ENCODE measurements at regions of chr3 and their contacts with region 1.

Region 1: GRCh38 chr3:129934234-129935123 is 40.0 kb upstream of the TRH start:
- DNase-seq: no peak
- ATAC-seq: peak; percentile 58
- H3K4me3 ChIP-seq: no peak overlapping the region
- H3K27ac ChIP-seq: no peak overlapping the region
- H3K4me1 ChIP-seq: no peaks in the 10 kb centered on the region
- H3K27me3 ChIP-seq: peaks cover 0 to 2% of the 10 kb centered on the region in 2 donors

Region 2: DNA sequence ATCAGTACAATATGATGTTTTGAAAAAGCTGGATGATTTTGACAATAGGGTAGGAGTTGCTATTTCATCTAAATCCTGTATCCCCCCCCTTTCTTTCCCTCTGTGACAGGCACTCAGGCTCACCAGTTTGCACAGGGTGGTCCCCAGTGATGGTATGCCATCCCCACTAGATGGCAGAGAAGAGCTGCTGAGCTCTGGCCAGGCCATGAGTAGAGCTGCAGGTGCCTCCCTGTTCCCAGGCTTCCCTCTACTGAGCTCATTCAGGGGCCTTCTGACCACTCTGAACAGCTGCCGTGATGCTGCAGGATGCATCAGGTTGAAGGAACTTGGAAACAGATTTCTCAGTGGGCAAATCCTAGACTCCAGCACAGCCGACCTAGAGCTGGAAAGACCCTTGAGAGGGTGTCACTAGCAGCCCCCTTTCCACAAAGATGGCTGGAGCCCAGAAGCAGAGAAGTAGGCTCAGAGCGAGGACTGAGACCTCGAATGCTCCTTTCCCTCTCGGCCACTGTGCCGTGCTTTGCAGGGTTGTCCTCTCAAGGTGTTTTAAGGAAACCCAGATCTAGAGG is 551.1 kb before region 1 on chr3:
- intact Hi-C with region 1: loop called in 1 of 2 experiments (anchors 10 kb)
- DNase-seq: peak in 1 of 2 donors; percentile 65
- ATAC-seq: peak; percentile 79
- H3K4me3 ChIP-seq: no peak overlapping the region
- H3K27ac ChIP-seq: no peak overlapping the region
- H3K4me1 ChIP-seq: no peaks in the 10 kb centered on the region
- H3K27me3 ChIP-seq: no peaks in the 10 kb centered on the region

Region 3: GRCh38 chr3:129490242-129491045 is 444.0 kb before region 1 on chr3:
- intact Hi-C with region 1: loop called in 1 of 2 experiments (anchors 10 kb)
- DNase-seq: peak; percentile 92 to 95
- ATAC-seq: peak; percentile 92
- H3K4me3 ChIP-seq: no peak overlapping the region
- H3K27ac ChIP-seq: peak overlapping the region; percentile 62 to 86
- H3K4me1 ChIP-seq: peaks cover 0 to 2% of the 10 kb centered on the region in 2 donors
- H3K27me3 ChIP-seq: no peaks in the 10 kb centered on the region

Region 4: GRCh38 chr3:129627429-129628168 is 306.9 kb before region 1 on chr3:
- intact Hi-C with region 1: loop called (anchors 2 to 5 kb)
- DNase-seq: peak; percentile 87 to 88
- ATAC-seq: peak; percentile 76
- H3K4me3 ChIP-seq: peak overlapping the region; percentile 5 to 36
- H3K27ac ChIP-seq: peak overlapping the region; percentile 77 to 98
- H3K4me1 ChIP-seq: no peaks in the 10 kb centered on the region
- H3K27me3 ChIP-seq: no peaks in the 10 kb centered on the region

Region 5: DNA sequence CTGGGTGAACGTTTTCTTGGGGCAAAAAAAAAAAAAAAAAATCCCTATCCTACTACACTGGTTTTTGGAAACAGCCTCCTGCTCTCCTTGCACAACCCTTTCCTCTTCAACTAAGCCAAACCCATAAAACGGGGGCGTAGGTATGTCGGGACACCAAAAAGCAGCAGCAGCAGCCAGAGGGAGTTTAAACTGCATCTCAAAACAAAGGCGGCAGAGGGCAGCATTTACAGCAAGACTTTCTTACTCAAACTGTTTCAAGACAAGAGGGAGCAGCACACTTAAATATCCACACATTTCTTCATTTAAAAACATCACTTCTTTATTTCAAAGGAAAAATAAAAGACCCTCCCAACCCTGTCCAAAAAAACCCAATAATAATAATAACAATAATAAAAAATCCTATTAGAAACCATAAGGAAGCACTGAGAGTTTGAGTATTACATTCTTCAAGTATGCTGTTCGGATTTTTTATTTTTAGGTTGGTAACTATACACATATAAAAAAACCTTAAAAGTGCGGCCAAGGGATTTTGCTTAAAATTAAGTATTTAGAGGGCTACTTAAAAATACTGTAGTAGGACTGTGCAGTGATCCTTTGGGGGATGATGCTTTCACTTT is 284.1 kb before region 1 on chr3:
- intact Hi-C with region 1: loop called in 1 of 2 experiments (anchors 5 kb)
- DNase-seq: peak in 1 of 2 donors; percentile 75
- ATAC-seq: peak; percentile 81
- H3K4me3 ChIP-seq: no peak overlapping the region
- H3K27ac ChIP-seq: no peak overlapping the region
- H3K4me1 ChIP-seq: peaks cover 0 to 5% of the 10 kb centered on the region in 2 donors
- H3K27me3 ChIP-seq: no peaks in the 10 kb centered on the region

Region 6: DNA sequence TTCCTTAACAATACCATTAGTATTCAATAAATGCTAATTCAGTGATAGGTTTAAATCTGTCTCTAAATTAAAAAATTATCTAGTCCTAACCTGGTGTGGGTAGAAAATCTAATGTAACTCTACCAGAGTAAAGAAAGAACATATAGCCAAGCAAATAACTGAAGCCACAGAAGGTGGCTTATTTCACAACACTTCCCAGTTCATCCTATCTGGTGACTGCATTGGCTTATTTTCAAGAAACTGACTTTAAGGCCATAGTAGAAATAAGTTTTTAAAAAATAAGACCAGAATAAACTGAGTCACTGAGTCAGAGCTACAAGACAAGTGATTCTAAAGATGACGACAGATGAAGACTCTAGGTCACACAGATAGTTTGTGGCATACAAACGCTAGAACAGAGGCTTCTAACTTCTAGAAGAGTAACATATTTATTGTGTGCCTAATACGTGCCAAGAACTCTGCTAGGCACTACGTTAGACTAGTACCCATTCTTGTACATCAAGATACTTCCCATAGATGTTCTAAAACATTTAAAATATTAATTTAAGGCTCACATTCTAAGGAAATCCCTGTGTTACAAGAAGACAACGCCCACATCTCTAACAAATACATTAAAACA is 66.9 kb before region 1 on chr3:
- intact Hi-C with region 1: no loop called
- DNase-seq: no peak
- ATAC-seq: no peak
- H3K4me3 ChIP-seq: no peak overlapping the region
- H3K27ac ChIP-seq: no peak overlapping the region
- H3K4me1 ChIP-seq: no peaks in the 10 kb centered on the region
- H3K27me3 ChIP-seq: no peaks in the 10 kb centered on the region

Region 7: GRCh38 chr3:129975038-129975704 is 40.7 kb after region 1 on chr3:
- intact Hi-C with region 1: no loop called
- DNase-seq: peak; percentile 57 to 79
- ATAC-seq: no peak
- H3K4me3 ChIP-seq: no peak overlapping the region
- H3K27ac ChIP-seq: no peak overlapping the region
- H3K4me1 ChIP-seq: no peaks in the 10 kb centered on the region
- H3K27me3 ChIP-seq: no peaks in the 10 kb centered on the region

Measured in aorta (tissue), 5 donors.